AG04450 (cell line): ENCODE measurements at regions of chr17 and their contacts with region 1.

Region 1: GRCh38 chr17:82781894-82782274 is 30.0 kb downstream of the TBCD start:
- DNase-seq: peak; percentile 50
- H3K4me3 ChIP-seq: no peak overlapping the region
- H3K27ac ChIP-seq: peak overlapping the region; percentile 2
- H3K27me3 ChIP-seq: no peaks in the 10 kb centered on the region
- CTCF ChIP-seq: peak; percentile 99

Region 2: DNA sequence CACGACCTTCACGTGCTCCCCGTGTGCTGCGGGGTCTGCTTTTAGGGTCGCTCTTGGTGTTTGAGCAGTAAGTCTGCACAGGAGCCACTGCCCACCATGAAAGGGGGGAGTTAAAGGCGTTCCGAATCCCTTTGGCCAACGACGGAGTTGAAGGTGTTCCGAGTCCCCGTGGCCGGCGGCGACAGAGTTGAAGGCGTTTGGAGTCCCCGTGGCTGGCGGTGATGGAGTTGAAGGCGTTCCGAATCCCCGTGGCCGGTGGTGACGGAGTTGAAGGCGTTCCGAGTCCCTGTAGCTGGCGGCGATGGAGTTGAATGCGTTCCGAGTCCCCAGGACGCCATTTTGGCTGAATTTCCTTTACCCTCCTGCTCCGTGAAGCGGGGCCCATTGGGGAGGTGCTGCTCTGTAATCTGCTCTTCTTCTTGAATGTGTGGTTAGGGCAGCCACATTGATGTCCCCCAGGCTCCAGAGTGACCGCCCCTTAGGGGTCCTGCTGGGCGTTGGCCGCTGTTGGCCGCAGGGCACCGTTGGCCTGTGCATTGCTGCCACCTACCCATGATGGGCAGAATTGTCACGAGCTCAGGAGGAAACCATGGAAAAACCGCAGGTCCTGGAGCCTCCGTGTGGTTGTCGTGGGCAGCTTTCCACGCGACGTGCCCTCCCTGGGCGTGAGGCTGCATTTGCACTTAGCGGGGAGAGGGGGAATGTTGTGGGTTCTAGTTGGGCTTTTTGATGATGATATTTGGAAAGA is 131.6 kb after region 1 on chr17:
- CTCF ChIA-PET with region 1: interaction called, 15 read pairs
- POLR2A ChIA-PET with region 1: no interaction called
- DNase-seq: no peak
- H3K4me3 ChIP-seq: no peak overlapping the region
- H3K27ac ChIP-seq: no peak overlapping the region
- H3K27me3 ChIP-seq: no peaks in the 10 kb centered on the region
- CTCF ChIP-seq: peak; percentile 31; the same call in 1 of the 2 replicates

Region 3: GRCh38 chr17:83024218-83024971 is 242.5 kb after region 1 on chr17:
- CTCF ChIA-PET with region 1: no interaction called
- POLR2A ChIA-PET with region 1: no interaction called
- DNase-seq: no peak
- H3K4me3 ChIP-seq: no peak overlapping the region
- H3K27ac ChIP-seq: no peak overlapping the region
- H3K27me3 ChIP-seq: no peaks in the 10 kb centered on the region
- CTCF ChIP-seq: no peak